Spleen (tissue), 13 donors: ENCODE measurements at regions of chr19 and their contacts with region 1.

Region 1: GRCh38 chr19:10574462-10574861 is 5.7 kb upstream of the CDKN2D start:
- DNase-seq: no peak
- H3K4me3 ChIP-seq: no peak overlapping the region
- H3K27ac ChIP-seq: no peak overlapping the region
- H3K4me1 ChIP-seq: peaks cover 3 to 20% (median 14%) of the 10 kb centered on the region in 6 donors
- H3K27me3 ChIP-seq: no peaks in the 10 kb centered on the region
- CTCF ChIP-seq: no peak
- POLR2A ChIP-seq: no peak

Region 2: DNA sequence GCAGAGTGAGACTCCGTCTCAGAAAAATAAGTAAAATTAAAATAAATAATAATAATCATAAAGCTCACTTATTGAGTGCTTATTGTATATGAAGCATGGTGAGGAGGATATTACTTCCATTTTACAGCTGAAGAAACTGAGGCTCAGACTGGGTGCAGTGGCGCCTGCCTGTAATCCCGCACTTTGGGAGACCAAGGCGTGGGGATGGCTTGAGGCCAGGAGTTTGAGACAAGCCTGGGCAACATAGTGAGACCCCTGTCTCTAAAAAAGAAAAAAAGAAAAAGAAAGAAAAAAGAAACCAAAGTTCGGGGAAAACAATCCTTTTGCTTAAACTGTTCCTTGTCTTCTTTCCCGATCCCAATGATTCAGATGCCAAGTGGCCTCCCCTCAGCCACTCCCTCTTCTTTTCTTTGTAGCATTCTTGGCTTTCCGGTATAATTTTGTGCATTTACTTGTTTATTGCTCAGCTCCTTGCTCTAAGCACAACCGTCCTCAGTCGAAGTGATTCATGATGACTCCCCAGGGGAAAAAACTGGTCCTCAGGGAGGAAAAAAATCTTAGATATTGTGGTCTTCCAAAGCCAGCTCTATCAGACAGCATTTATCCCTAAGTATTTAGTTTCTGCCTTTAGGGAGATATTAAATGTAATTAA is 453.8 kb before region 1 on chr19:
- intact Hi-C with region 1: no loop called
- DNase-seq: no peak
- H3K4me3 ChIP-seq: no peak overlapping the region
- H3K27ac ChIP-seq: no peak overlapping the region
- H3K4me1 ChIP-seq: peaks cover 7 to 55% (median 30%) of the 10 kb centered on the region in 6 donors
- H3K27me3 ChIP-seq: no peaks in the 10 kb centered on the region
- CTCF ChIP-seq: no peak
- POLR2A ChIP-seq: no peak

Region 3: DNA sequence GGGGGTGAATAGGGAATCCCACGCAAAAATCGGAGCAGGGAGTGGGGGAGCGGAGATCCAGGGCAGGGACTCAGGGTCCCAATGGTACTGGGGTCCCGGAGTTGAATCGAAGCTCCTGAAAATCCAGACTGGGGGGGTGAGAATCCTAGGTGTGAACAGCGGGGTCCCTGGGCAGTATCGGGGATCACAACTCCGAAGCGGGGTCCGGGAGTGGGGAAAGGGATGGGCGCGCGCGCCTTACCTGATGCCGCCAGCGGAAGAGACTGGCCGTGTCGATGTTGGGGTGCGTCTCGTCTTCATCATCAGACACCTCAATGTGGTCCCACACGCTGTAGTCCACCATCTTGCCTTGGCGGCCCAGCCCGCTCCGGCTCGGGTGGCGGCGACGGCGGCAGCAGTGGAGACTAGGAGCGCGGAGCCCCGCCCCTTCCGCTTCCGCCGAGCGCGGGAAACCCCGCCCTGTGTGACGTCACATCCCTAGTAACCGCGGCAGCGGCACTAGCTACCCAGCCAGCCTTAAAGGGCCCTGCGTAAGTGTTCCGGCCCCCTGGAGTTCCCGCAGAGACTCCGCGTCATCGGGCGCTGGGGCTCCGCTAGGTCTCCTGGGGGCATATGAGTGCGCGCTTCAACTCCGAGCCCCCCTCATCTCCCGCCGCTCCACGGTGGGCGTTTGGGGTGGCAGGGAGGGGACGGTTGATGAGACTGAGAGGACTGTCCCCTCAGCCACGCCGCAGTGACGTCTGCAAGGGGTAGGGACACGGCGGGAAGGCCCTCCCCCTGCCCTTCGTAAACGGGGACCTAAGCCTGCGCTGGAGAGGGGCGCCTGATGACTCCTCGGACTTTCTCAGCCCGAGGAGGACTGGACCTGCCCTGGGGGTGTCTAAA is 171.1 kb before region 1 on chr19 and contains the start of gene CDC37:
- intact Hi-C with region 1: loop called (anchors 10 kb)
- DNase-seq: peak; percentile 98
- H3K4me3 ChIP-seq: peak within 1 kb of the TSS; percentile 86 to 98 (median 90)
- H3K27ac ChIP-seq: peak within 1 kb of the TSS; percentile 57 to 91 (median 84)
- H3K4me1 ChIP-seq: peaks cover 51 to 97% (median 83%) of the 10 kb centered on the region in 6 donors
- H3K27me3 ChIP-seq: peaks cover 0 to 32% (median 14%) of the 10 kb centered on the region in 7 donors
- CTCF ChIP-seq: peak in 2 of 11 experiments; percentile 2 to 4
- POLR2A ChIP-seq: peak in 1 of 3 donors; percentile 59
- total RNA-seq, gene CDC37: 131 to 186 (median 150) TPM

Region 4: DNA sequence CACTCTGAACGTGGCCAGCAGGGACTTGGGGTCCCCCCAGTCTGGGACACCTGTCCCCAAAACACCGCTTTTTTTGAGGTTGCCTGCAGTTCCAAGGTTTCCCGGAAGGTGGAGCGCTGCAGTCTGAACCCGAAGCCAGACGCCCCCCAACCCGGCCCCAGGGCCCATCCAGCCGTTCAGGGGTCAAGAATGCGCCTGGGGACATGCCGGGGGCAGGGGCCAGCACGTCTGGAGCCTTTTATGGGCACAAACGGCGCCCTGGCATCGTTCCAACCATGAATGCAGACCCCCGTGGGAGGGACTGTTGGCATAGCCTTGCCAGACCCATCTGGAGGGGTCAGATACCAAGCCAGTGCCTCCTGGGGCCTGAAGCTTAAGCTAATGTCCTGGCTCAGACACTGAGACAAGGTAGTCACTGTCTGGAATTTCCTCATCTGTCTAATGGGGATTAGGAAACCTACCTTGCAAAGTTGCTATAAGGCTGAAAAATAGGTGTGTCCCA is 64.1 kb before region 1 on chr19:
- intact Hi-C with region 1: no loop called
- DNase-seq: no peak
- H3K4me3 ChIP-seq: no peak overlapping the region
- H3K27ac ChIP-seq: peak overlapping the region in 2 of 8 donors; percentile 35 to 36
- H3K4me1 ChIP-seq: peaks cover 10 to 56% (median 26%) of the 10 kb centered on the region in 6 donors
- H3K27me3 ChIP-seq: peaks cover 6 to 64% (median 35%) of the 10 kb centered on the region in 7 donors
- CTCF ChIP-seq: peak; percentile 30 to 79 (median 55)
- POLR2A ChIP-seq: no peak